Caco-2 (cell line): ENCODE measurements at regions of chr2 and their contacts with region 1.

Region 1: GRCh38 chr2:172931918-172932520 is 143.6 kb upstream of the MAP3K20 start:
- DNase-seq: peak; percentile 53 to 67
- H3K4me3 ChIP-seq: no peak overlapping the region
- H3K4me3 Mint-ChIP-seq: no peak overlapping the region
- H3K27ac Mint-ChIP-seq: no peak overlapping the region
- H3K4me1 ChIP-seq: peaks cover 8% of the 10 kb centered on the region
- H3K4me1 Mint-ChIP-seq: peaks cover 7% of the 10 kb centered on the region
- H3K27me3 ChIP-seq: no peaks in the 10 kb centered on the region
- H3K27me3 Mint-ChIP-seq: peaks cover 3% of the 10 kb centered on the region
- CTCF ChIP-seq: peak; percentile 55 to 83

Region 2: DNA sequence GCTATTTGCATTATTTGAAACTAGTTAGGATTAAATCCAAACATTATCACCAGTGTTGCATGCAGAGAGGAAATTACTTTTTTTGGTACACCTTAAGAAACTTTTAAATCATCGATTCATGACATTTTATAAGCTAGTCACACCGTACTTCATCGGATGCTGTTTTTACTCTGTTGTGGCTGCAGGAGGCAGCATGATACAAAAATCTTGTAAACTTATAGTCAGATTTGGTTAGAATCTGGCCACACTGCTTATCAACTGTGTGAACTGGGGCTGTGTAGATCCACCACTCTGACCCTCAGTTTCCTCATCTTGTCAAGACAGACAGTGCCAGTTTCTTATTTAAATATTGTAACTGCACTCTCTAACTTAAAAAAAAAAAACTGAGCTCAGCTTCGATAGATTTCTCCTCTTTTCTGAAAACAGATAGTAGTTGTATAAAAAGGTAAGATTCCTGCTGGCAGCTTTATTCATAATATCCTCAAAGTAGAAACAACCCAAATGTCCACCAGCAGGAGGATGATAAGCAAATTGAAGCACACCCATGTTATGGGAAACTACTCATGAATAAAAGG is 118.6 kb before region 1 on chr2:
- CTCF ChIA-PET with region 1: interaction called, 24 read pairs
- POLR2A ChIA-PET with region 1: no interaction called
- intact Hi-C with region 1: no loop called
- DNase-seq: peak in 1 of 2 experiments; percentile 16
- H3K4me3 ChIP-seq: no peak overlapping the region
- H3K4me3 Mint-ChIP-seq: no peak overlapping the region
- H3K27ac Mint-ChIP-seq: no peak overlapping the region
- H3K4me1 ChIP-seq: no peaks in the 10 kb centered on the region
- H3K4me1 Mint-ChIP-seq: no peaks in the 10 kb centered on the region
- H3K27me3 ChIP-seq: no peaks in the 10 kb centered on the region; the same call in 1 of the 2 replicates
- H3K27me3 Mint-ChIP-seq: peaks cover 3% of the 10 kb centered on the region
- CTCF ChIP-seq: peak; percentile 42

Region 3: DNA sequence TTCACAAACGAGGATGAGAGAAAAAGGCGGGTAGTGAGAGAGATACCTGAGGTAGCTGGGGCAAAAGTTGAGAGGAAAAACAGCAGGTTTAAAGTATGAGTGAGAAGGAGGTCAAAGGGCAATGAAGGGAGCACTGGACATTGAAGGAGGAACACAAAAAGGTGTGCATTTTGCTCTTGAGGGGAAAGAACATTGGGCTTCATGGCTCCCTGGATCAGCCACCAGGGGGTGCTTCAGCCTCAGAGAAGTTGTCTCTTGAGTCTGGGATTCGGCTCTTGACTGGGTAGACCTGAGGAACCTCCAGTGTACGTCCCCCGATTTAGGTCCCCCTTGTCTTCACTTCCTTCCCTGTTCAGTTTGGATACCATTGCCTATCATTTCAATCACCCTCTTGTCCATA is 67.8 kb before region 1 on chr2:
- CTCF ChIA-PET with region 1: interaction called, 5 read pairs
- POLR2A ChIA-PET with region 1: no interaction called
- intact Hi-C with region 1: loop called (anchors 1 kb)
- DNase-seq: peak in 1 of 2 experiments; percentile 42
- H3K4me3 ChIP-seq: no peak overlapping the region
- H3K4me3 Mint-ChIP-seq: no peak overlapping the region
- H3K27ac Mint-ChIP-seq: no peak overlapping the region
- H3K4me1 ChIP-seq: 0 out of 2 replicates have a peak, but pooled peaks cover 3% of the 10 kb centered on the region
- H3K4me1 Mint-ChIP-seq: peaks cover 5% of the 10 kb centered on the region
- H3K27me3 ChIP-seq: no peaks in the 10 kb centered on the region
- H3K27me3 Mint-ChIP-seq: no peaks in the 10 kb centered on the region
- CTCF ChIP-seq: peak; percentile 49 to 52